Caco-2 (cell line): ENCODE measurements at regions of chr13 and their contacts with region 1.

Region 1: GRCh38 chr13:23579072-23579895 is 9.1 kb downstream of the TNFRSF19 start:
- DNase-seq: peak; percentile 93 to 98
- H3K4me3 ChIP-seq: peak overlapping the region; percentile 95
- H3K4me3 Mint-ChIP-seq: peak overlapping the region; percentile 87
- H3K27ac Mint-ChIP-seq: peak overlapping the region; percentile 37
- H3K4me1 ChIP-seq: peaks cover 17% of the 10 kb centered on the region; the same call in 1 of the 2 replicates
- H3K4me1 Mint-ChIP-seq: peaks cover 20% of the 10 kb centered on the region
- H3K27me3 ChIP-seq: no peaks in the 10 kb centered on the region
- H3K27me3 Mint-ChIP-seq: no peaks in the 10 kb centered on the region
- CTCF ChIP-seq: no peak

Region 2: GRCh38 chr13:23375001-23375971 is 204.0 kb before region 1 on chr13:
- CTCF ChIA-PET with region 1: no interaction called
- POLR2A ChIA-PET with region 1: no interaction called
- intact Hi-C with region 1: loop called (anchors 10 kb)
- DNase-seq: peak; percentile 94 to 96
- H3K4me3 ChIP-seq: peak overlapping the region; percentile 70
- H3K4me3 Mint-ChIP-seq: peak overlapping the region; percentile 63
- H3K27ac Mint-ChIP-seq: no peak overlapping the region
- H3K4me1 ChIP-seq: peaks cover 12% of the 10 kb centered on the region; the same call in 1 of the 2 replicates
- H3K4me1 Mint-ChIP-seq: peaks cover 5% of the 10 kb centered on the region
- H3K27me3 ChIP-seq: no peaks in the 10 kb centered on the region
- H3K27me3 Mint-ChIP-seq: peaks cover 8% of the 10 kb centered on the region
- CTCF ChIP-seq: peak in 1 of 2 experiments; percentile 15

Region 3: DNA sequence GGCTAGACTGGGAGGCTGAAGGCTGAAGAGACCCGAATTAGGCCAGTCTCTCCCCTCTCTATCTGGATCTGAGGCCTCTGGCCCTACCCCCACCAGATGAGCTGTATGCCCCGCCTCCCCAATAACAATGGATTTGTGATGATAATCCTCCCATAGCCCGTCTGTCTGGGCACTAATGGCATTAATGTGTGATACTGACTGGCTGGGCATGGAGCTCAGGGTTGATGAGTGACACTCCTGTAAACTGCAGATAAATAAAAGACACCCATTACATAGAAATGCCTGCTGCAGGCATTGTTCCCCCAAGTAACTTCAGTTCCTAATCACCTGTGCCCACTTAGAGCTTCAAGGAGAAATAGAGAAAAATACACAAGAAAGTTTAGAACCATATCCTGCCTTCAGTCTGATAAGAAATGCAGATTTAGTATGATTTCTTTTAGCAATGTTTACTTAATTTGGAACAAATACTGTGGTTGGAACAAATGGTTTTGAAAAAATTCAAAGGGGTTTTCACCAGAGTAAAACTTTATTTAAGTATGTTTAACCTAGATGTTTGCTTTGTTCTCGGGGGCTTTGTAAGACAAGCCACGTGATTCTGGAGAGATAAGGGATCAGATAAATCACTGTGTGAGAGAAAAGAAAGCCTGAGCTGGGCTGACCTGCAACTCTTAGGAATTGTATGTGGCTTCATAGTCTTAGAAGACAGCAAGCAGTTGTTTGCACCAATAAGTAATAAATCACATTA is 51.2 kb after region 1 on chr13:
- CTCF ChIA-PET with region 1: interaction called, 18 read pairs
- POLR2A ChIA-PET with region 1: interaction called, 4 read pairs
- intact Hi-C with region 1: loop called (anchors 1 kb)
- DNase-seq: peak; percentile 72 to 76
- H3K4me3 ChIP-seq: no peak overlapping the region
- H3K4me3 Mint-ChIP-seq: peak overlapping the region; percentile 52
- H3K27ac Mint-ChIP-seq: peak overlapping the region; percentile 87
- H3K4me1 ChIP-seq: peaks cover 76% of the 10 kb centered on the region
- H3K4me1 Mint-ChIP-seq: peaks cover 47% of the 10 kb centered on the region
- H3K27me3 ChIP-seq: no peaks in the 10 kb centered on the region
- H3K27me3 Mint-ChIP-seq: no peaks in the 10 kb centered on the region
- CTCF ChIP-seq: no peak

Region 4: GRCh38 chr13:23707674-23708073 is 128.4 kb after region 1 on chr13:
- CTCF ChIA-PET with region 1: interaction called, 7 read pairs
- POLR2A ChIA-PET with region 1: no interaction called
- intact Hi-C with region 1: loop called (anchors 1 kb)
- DNase-seq: peak in 1 of 2 experiments; percentile 40
- H3K4me3 ChIP-seq: no peak overlapping the region
- H3K4me3 Mint-ChIP-seq: no peak overlapping the region
- H3K27ac Mint-ChIP-seq: no peak overlapping the region
- H3K4me1 ChIP-seq: no peaks in the 10 kb centered on the region
- H3K4me1 Mint-ChIP-seq: peaks cover 11% of the 10 kb centered on the region
- H3K27me3 ChIP-seq: no peaks in the 10 kb centered on the region
- H3K27me3 Mint-ChIP-seq: no peaks in the 10 kb centered on the region
- CTCF ChIP-seq: peak in 1 of 2 experiments; percentile 17

Region 5: GRCh38 chr13:23871616-23872220 is 292.4 kb after region 1 on chr13:
- CTCF ChIA-PET with region 1: no interaction called
- POLR2A ChIA-PET with region 1: no interaction called
- intact Hi-C with region 1: loop called (anchors 1 kb)
- DNase-seq: no peak
- H3K4me3 ChIP-seq: no peak overlapping the region
- H3K4me3 Mint-ChIP-seq: no peak overlapping the region
- H3K27ac Mint-ChIP-seq: no peak overlapping the region
- H3K4me1 ChIP-seq: peaks cover 6% of the 10 kb centered on the region; the same call in 1 of the 2 replicates
- H3K4me1 Mint-ChIP-seq: no peaks in the 10 kb centered on the region
- H3K27me3 ChIP-seq: no peaks in the 10 kb centered on the region
- H3K27me3 Mint-ChIP-seq: no peaks in the 10 kb centered on the region
- CTCF ChIP-seq: peak; percentile 42 to 69

Region 6: DNA sequence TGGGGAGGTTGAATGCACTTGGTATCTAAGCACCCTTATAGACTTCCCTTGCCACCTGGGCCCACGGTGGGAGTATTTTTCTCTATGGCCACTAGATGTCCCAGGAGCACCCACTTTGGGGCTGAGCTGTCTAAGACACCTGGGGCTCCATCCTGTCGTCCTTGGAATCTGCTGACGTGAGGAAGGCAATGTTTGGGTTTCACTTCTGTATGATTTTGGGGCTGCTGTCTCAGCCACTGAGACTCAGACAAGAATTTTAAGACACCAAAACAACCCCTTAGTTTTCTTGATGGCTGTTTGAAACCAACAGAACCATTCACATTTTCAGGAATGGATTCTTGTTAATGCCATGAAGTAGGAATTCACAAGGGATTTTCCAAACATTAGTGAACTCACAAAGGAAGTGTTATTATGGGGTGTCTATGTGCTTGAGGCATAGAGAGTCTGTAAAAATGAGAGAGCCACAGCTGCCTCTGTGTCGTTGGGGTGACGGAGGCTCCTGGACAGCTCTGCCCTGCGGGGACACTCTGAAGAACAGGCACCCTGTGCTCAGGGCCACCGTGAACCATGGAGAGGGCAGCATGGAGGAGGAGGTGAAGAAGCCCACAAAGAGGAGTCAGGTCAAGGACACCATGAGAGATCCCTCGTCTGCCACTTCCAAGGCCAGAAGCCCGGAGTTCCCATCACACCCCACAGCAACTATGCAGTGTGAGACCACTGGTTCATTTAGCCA is 474.4 kb after region 1 on chr13:
- CTCF ChIA-PET with region 1: no interaction called
- POLR2A ChIA-PET with region 1: no interaction called
- intact Hi-C with region 1: no loop called
- DNase-seq: peak; percentile 82 to 85
- H3K4me3 ChIP-seq: no peak overlapping the region
- H3K4me3 Mint-ChIP-seq: no peak overlapping the region
- H3K27ac Mint-ChIP-seq: no peak overlapping the region
- H3K4me1 ChIP-seq: no peaks in the 10 kb centered on the region
- H3K4me1 Mint-ChIP-seq: peaks cover 13% of the 10 kb centered on the region
- H3K27me3 ChIP-seq: no peaks in the 10 kb centered on the region
- H3K27me3 Mint-ChIP-seq: no peaks in the 10 kb centered on the region
- CTCF ChIP-seq: peak; percentile 82 to 85